ENCODE measurements at regions of chr6 and their contacts with region 1.

Region 1: GRCh38 chr6:42808492-42809483 is 26.9 kb downstream of the BICRAL start:
- DNase-seq: no peak
- ATAC-seq: no peak; the same call in 2 of the 3 replicates
- H3K4me3 ChIP-seq: no peak overlapping the region
- H3K27ac ChIP-seq: no peak overlapping the region
- H3K4me1 ChIP-seq: no peaks in the 10 kb centered on the region
- H3K27me3 ChIP-seq: no peaks in the 10 kb centered on the region
- CTCF ChIP-seq: no peak
- EP300 ChIP-seq: no peak
- POLR2A ChIP-seq: no peak
- RAD21 ChIP-seq: no peak

Region 2: DNA sequence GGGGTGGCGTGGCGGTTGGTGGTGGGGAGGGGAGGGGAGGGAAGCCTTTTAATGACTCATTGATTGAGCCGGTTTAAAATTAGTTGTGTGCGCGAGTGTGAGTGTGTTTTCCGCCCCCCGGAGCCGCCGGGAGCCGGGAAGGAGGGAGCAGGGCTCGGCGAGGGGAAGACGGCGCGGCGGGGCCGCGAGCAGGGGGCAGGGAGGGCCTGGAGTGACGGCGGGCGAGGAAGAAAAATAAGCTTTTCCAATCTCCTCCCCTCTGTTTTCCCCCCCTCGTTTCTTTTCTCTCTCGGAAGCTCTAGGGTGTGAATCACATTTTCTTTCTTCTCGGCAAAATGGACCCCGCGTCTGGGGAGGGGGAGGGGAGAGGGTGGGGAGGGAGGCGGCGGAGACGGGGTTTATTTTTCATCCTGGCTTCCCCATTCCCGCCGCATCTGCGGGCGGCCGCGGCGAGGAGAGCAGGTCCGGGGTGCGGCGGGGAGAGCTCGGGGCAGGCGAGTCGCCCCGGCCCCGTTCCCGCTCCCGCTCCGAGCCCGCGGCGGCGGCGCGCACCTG is 26.1 kb before region 1 on chr6:
- CTCF ChIA-PET with region 1: no interaction called
- POLR2A ChIA-PET with region 1: interaction called, 21 read pairs
- in situ Hi-C with region 1: no loop called
- intact Hi-C with region 1: no loop called
- DNase-seq: peak; percentile 87 to 92 (median 90)
- ATAC-seq: peak; percentile 45
- H3K4me3 ChIP-seq: peak overlapping the region; percentile 77
- H3K27ac ChIP-seq: peak overlapping the region; percentile 91
- H3K4me1 ChIP-seq: peaks cover 35 to 53% of the 10 kb centered on the region in 2 experiments
- H3K27me3 ChIP-seq: no peaks in the 10 kb centered on the region
- CTCF ChIP-seq: no peak
- EP300 ChIP-seq: no peak; the same call in 1 of the 2 replicates
- POLR2A ChIP-seq: peak; percentile 86
- RAD21 ChIP-seq: no peak